Sigmoid colon (tissue), 7 donors: ENCODE measurements at regions of chr3 and their contacts with region 1.

Region 1: GRCh38 chr3:126357295-126358037 is at the start of gene KLF15:
- DNase-seq: peak; percentile 96
- H3K4me3 ChIP-seq: peak within 1 kb of the TSS; percentile 61 to 97 (median 84)
- H3K27ac ChIP-seq: peak within 1 kb of the TSS; percentile 91 to 96 (median 94)
- H3K4me1 ChIP-seq: peaks cover 0 to 40% (median 35%) of the 10 kb centered on the region in 4 donors
- H3K27me3 ChIP-seq: no peaks in the 10 kb centered on the region
- CTCF ChIP-seq: no peak
- EP300 ChIP-seq: peak in 1 of 4 donors; percentile 21
- POLR2A ChIP-seq: no peak
- total RNA-seq, gene KLF15: 21.9 to 50.2 (median 35.2) TPM

Region 2: DNA sequence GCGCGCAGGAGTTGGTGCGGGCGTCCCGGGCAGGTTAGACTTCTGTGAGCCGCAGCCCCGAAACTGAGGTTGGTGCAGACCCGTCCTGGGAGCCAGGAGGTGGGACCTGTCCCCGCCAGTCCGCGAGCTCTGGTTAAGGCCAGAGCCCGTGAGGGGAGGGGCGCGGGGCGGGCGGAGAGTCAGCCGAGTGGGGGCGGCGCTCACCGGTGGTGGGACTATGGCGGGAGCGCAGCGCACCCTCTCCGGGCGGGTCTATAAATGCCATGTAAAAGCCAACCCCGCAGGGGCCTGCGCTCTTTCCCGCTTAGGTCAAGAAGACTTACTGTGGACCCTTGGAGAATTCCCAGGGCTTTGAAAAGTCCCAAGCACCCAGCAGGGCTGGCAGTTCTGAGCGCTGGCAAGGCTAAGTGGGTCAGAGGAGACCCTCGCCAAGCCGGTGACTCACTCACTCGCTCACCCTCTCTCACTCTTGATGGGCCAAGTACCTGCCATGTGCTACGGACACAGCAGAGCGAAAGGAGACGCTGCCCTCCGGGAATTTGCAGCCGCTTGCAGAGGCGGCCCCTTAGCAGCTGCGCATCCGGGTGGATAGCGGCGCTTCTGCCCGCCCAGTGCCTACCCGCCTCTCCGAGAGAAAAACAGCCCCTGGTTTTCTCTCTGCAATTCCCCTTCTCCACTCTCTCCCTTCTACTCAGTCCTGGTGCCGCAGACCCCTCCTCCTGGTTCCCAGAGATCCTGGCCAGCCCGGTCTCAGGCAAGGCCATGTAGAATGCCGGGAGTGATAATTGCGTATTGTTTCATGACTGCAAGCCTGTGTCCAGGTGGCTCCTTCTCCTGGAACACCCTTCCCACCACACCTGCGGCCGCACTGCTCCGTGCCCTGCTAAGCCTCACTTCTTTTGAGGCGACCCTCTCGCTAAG is 176.7 kb before region 1 on chr3 and contains the start of gene ALDH1L1:
- intact Hi-C with region 1: no loop called
- DNase-seq: peak; percentile 97
- H3K4me3 ChIP-seq: peak within 1 kb of the TSS; percentile 56 to 78 (median 62)
- H3K27ac ChIP-seq: peak within 1 kb of the TSS; percentile 86 to 95 (median 90)
- H3K4me1 ChIP-seq: peaks cover 0 to 36% (median 30%) of the 10 kb centered on the region in 4 donors
- H3K27me3 ChIP-seq: no peaks in the 10 kb centered on the region
- CTCF ChIP-seq: no peak
- EP300 ChIP-seq: peak; percentile 40 to 80 (median 75)
- POLR2A ChIP-seq: peak; percentile 47 to 65
- total RNA-seq, gene ALDH1L1: 15.0 to 32.5 (median 27.6) TPM

Region 3: GRCh38 chr3:126256251-126256650 is 101.2 kb before region 1 on chr3:
- intact Hi-C with region 1: no loop called
- DNase-seq: no peak
- H3K4me3 ChIP-seq: no peak overlapping the region
- H3K27ac ChIP-seq: no peak overlapping the region
- H3K4me1 ChIP-seq: peaks cover 0 to 4% (median 1%) of the 10 kb centered on the region in 4 donors
- H3K27me3 ChIP-seq: no peaks in the 10 kb centered on the region
- CTCF ChIP-seq: no peak
- EP300 ChIP-seq: no peak
- POLR2A ChIP-seq: no peak

Region 4: GRCh38 chr3:126267226-126267975 is 90.1 kb before region 1 on chr3:
- intact Hi-C with region 1: loop called (anchors 1 kb)
- DNase-seq: peak; percentile 92
- H3K4me3 ChIP-seq: peak overlapping the region; percentile 1 to 46 (median 37)
- H3K27ac ChIP-seq: peak overlapping the region; percentile 85 to 92 (median 89)
- H3K4me1 ChIP-seq: peaks cover 0 to 52% (median 43%) of the 10 kb centered on the region in 4 donors
- H3K27me3 ChIP-seq: no peaks in the 10 kb centered on the region
- CTCF ChIP-seq: peak in 1 of 4 experiments; percentile 24
- EP300 ChIP-seq: peak in 2 of 4 donors; percentile 21 to 59
- POLR2A ChIP-seq: peak; percentile 10 to 49

Region 5: GRCh38 chr3:126287536-126288241 is 69.8 kb before region 1 on chr3:
- intact Hi-C with region 1: loop called (anchors 1 kb)
- DNase-seq: peak; percentile 92
- H3K4me3 ChIP-seq: peak overlapping the region; percentile 32 to 54 (median 50)
- H3K27ac ChIP-seq: peak overlapping the region; percentile 87 to 88 (median 87)
- H3K4me1 ChIP-seq: peaks cover 0 to 23% (median 23%) of the 10 kb centered on the region in 4 donors
- H3K27me3 ChIP-seq: no peaks in the 10 kb centered on the region
- CTCF ChIP-seq: no peak
- EP300 ChIP-seq: peak in 1 of 4 donors; percentile 25
- POLR2A ChIP-seq: no peak

Region 6: GRCh38 chr3:126314790-126315658 is 42.4 kb before region 1 on chr3:
- intact Hi-C with region 1: loop called (anchors 5 kb)
- DNase-seq: peak; percentile 63
- H3K4me3 ChIP-seq: no peak overlapping the region
- H3K27ac ChIP-seq: peak overlapping the region in 1 of 4 donors; percentile 43
- H3K4me1 ChIP-seq: peaks cover 0 to 13% (median 6%) of the 10 kb centered on the region in 4 donors
- H3K27me3 ChIP-seq: no peaks in the 10 kb centered on the region
- CTCF ChIP-seq: no peak
- EP300 ChIP-seq: no peak
- POLR2A ChIP-seq: no peak